ENCODE measurements at regions of chr14 and their contacts with region 1.

Region 1: DNA sequence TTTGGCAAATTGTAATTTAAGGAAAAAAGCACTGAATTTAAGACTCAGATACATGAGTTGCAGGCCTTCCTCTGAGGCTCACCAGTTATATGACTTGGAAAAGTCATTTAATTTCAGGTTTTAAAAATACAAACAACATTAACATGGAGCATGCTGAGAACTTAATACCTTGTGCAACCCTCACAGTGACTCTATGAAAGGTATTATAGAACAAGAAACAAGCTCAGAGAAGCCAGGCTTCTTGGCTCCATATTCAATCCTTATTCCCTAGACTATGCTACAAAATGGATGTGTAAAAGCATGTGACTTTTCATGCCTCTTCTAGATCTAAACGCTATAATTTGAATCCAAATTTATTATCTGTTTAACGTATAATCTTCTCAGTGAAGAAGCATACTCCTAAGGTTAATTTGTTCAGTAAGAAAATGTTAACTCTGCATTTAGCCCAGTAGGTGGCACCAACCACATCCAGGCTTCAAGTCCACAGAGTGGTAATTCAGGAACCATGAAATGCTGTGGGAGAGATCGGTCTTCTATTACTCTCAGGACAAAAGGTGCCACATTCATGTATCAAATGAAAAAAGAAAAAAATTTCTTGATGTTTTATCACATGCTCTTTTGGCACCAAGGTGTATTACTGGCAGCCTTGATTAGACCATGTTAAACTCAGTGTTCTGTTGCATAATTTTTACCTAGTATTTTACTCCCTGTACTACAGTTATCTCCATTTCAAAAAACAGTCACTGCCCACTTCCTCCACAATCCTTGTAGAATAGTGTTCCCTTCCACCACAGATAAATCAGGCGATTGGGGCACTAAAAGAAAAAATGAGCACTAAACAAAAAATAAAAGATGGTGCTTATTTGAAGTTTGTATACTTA is 9.3 kb downstream of the CCDC196 start:
- DNase-seq: peak in 7 of 10 donors; percentile 16 to 64 (median 44)
- H3K4me3 ChIP-seq: peak overlapping the region in 46 of 59 donors; percentile 2 to 60 (median 30)
- H3K27ac ChIP-seq: no peak overlapping the region
- H3K27me3 ChIP-seq: no peaks in the 10 kb centered on the region
- CTCF ChIP-seq: peak; percentile 38 to 94 (median 82)

Region 2: DNA sequence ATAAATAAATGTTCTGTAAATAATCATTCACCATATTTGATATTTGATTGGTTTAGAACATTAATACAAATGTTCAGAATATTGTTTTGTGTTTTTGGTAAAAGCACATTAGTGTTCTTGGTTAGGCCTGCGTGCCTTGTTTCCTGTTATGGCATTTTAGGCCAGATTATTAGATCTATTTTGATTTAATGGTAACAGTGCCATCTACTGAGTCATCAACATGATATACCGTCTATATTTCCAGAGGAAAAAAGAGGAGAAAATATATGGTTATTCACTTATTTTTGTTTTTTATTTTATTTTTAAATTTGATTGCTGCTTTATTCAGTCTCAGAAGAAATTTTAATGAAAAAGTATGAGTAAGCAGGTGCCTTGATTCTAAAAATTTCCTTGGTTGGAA is 72.8 kb after region 1 on chr14:
- intact Hi-C with region 1: loop called in 1 of 2 experiments (anchors 5 kb)
- DNase-seq: no peak
- H3K4me3 ChIP-seq: no peak overlapping the region
- H3K27ac ChIP-seq: no peak overlapping the region
- H3K27me3 ChIP-seq: no peaks in the 10 kb centered on the region
- CTCF ChIP-seq: peak in 35 of 56 donors; percentile 8 to 66 (median 36)

Measured in dorsolateral prefrontal cortex (tissue), 120 donors.